ENCODE measurements at regions of chr6 and their contacts with region 1.

Region 1: DNA sequence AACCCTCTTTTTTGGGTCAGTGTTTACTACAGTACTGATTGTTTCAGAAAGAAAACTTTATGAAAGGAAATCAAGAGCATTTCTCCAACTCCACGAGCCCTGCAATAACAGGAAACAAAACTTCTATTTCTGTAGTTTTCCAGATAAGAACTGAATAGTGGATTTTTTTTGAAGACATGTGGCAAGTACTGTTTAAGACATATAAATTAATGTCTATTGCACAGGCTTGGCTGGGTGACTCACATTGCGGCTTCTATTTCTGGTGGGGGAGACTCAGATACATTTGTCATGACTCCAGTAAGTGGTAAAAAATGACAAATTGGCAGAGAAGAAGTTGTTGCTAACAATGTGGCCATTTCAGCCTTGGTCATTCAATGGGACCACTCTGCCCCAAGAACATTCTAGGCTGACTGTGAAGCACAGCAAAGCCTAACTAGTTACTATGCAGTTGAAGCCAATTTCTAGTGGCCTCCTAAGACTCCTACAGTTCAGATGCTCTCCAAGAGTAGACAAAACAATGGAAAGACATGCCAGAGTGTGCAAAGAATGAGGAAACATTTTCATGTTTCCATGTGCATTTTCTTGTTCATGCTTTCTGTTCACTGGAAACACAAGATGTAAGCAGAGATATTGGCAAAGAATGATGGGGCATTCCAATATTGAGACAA is 200.9 kb downstream of the EDN1 start:
- DNase-seq: no peak
- H3K4me3 ChIP-seq: no peak overlapping the region
- H3K27ac ChIP-seq: peak overlapping the region; percentile 54
- H3K4me1 ChIP-seq: peaks cover 18% of the 10 kb centered on the region
- H3K27me3 ChIP-seq: no peaks in the 10 kb centered on the region
- CTCF ChIP-seq: no peak

Region 2: DNA sequence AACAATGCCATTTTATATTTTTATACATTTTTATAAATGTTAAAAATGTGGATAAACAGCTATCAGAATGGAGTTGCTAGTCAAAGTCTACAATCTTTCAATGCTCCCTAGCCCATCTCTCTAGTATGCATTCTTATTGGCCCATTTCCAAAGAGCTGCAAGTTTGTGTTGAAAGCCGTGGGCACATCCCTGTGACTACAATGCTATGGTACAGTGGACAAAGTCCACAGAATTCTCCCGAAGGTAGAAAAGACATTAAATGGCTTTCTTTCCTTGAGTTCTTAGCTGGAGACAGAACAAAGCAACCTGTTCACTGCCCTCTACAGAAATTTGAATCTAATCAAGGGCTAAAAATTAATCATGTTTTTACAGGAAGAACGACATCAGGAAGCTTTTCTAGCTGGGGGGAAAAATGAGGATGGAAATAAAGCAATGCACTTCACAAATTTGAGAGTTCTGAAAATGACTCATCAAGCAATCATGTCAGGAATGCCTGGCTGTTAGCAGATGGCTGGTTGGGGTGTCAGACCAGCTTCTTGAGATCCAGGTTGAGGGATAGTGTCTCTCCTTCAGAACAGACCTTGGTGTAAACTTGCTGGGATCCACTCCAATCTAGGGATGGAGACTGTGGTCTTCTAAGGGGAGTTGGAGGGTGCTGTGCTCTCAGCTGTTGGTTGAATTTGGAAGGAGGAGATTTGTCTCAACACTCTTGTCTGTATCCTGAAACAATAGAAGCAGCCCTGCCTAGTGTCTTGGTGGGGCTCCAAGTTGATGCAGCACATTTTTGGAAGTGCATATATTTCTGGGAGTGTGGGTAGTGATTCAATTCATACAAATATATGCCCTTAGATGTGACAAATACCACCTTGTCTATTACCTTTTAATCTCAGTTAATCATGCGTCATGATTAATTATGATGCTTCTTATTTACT is 82.1 kb after region 1 on chr6:
- intact Hi-C with region 1: loop called (anchors 10 kb)
- DNase-seq: no peak
- H3K4me3 ChIP-seq: no peak overlapping the region
- H3K27ac ChIP-seq: peak overlapping the region; percentile 64
- H3K4me1 ChIP-seq: peaks cover 20% of the 10 kb centered on the region
- H3K27me3 ChIP-seq: no peaks in the 10 kb centered on the region
- CTCF ChIP-seq: no peak

Measured in left ventricle myocardium inferior (tissue), 1 donor.